ENCODE measurements at regions of chr19 and their contacts with region 1.

Region 1: GRCh38 chr19:55605207-55605636 is 225 bp upstream of the ZNF865 start:
- DNase-seq: peak; percentile 95 to 98 (median 97)
- H3K4me3 ChIP-seq: peak overlapping the region; percentile 43 to 83
- H3K4me3 Mint-ChIP-seq: peak overlapping the region; percentile 79 to 93 (median 84)
- H3K27ac ChIP-seq: peak overlapping the region; percentile 88
- H3K27ac Mint-ChIP-seq: peak overlapping the region; percentile 83 to 97 (median 94)
- H3K4me1 ChIP-seq: peaks cover 42% of the 10 kb centered on the region
- H3K4me1 Mint-ChIP-seq: peaks cover 41 to 73% (median 48%) of the 10 kb centered on the region in 4 donors
- H3K27me3 ChIP-seq: no peaks in the 10 kb centered on the region
- H3K27me3 Mint-ChIP-seq: no peaks in the 10 kb centered on the region

Region 2: GRCh38 chr19:55516878-55517620 is 88.2 kb before region 1 on chr19:
- CTCF ChIA-PET with region 1: interaction called, 22 read pairs
- POLR2A ChIA-PET with region 1: interaction called, 5 read pairs
- intact Hi-C with region 1: loop called (anchors 1 kb)
- DNase-seq: peak; percentile 85 to 86 (median 86)
- H3K4me3 ChIP-seq: peak overlapping the region in 1 of 2 donors; percentile 38
- H3K4me3 Mint-ChIP-seq: peak overlapping the region; percentile 71 to 86 (median 82)
- H3K27ac ChIP-seq: peak overlapping the region; percentile 42
- H3K27ac Mint-ChIP-seq: peak overlapping the region; percentile 77 to 97 (median 92)
- H3K4me1 ChIP-seq: peaks cover 6% of the 10 kb centered on the region
- H3K4me1 Mint-ChIP-seq: peaks cover 3 to 4% (median 3%) of the 10 kb centered on the region in 4 donors
- H3K27me3 ChIP-seq: no peaks in the 10 kb centered on the region
- H3K27me3 Mint-ChIP-seq: peaks cover 1 to 11% of the 10 kb centered on the region in 2 donors

Region 3: GRCh38 chr19:55552620-55553019 is 52.6 kb before region 1 on chr19:
- CTCF ChIA-PET with region 1: no interaction called
- POLR2A ChIA-PET with region 1: no interaction called
- intact Hi-C with region 1: no loop called
- DNase-seq: no peak
- H3K4me3 ChIP-seq: no peak overlapping the region
- H3K4me3 Mint-ChIP-seq: no peak overlapping the region
- H3K27ac ChIP-seq: no peak overlapping the region
- H3K27ac Mint-ChIP-seq: no peak overlapping the region
- H3K4me1 ChIP-seq: no peaks in the 10 kb centered on the region
- H3K4me1 Mint-ChIP-seq: no peaks in the 10 kb centered on the region
- H3K27me3 ChIP-seq: no peaks in the 10 kb centered on the region
- H3K27me3 Mint-ChIP-seq: peaks cover 13 to 21% of the 10 kb centered on the region in 2 donors

Region 4: GRCh38 chr19:55580628-55581144 is 24.5 kb before region 1 on chr19 and contains the start of gene ZNF579:
- CTCF ChIA-PET with region 1: interaction called, 9 read pairs
- POLR2A ChIA-PET with region 1: interaction called, 49 read pairs
- intact Hi-C with region 1: no loop called
- DNase-seq: peak; percentile 58 to 78 (median 63)
- H3K4me3 ChIP-seq: peak within 1 kb of the TSS; percentile 61 to 68
- H3K4me3 Mint-ChIP-seq: peak within 1 kb of the TSS; percentile 81 to 97 (median 88)
- H3K27ac ChIP-seq: peak within 1 kb of the TSS; percentile 69
- H3K27ac Mint-ChIP-seq: peak within 1 kb of the TSS; percentile 86 to 95 (median 93)
- H3K4me1 ChIP-seq: peaks cover 21% of the 10 kb centered on the region
- H3K4me1 Mint-ChIP-seq: peaks cover 22 to 38% (median 25%) of the 10 kb centered on the region in 4 donors
- H3K27me3 ChIP-seq: no peaks in the 10 kb centered on the region
- H3K27me3 Mint-ChIP-seq: peaks cover 0 to 1% of the 10 kb centered on the region in 2 donors
- total RNA-seq, gene ZNF579: 8.0 to 9.6 TPM

Region 5: DNA sequence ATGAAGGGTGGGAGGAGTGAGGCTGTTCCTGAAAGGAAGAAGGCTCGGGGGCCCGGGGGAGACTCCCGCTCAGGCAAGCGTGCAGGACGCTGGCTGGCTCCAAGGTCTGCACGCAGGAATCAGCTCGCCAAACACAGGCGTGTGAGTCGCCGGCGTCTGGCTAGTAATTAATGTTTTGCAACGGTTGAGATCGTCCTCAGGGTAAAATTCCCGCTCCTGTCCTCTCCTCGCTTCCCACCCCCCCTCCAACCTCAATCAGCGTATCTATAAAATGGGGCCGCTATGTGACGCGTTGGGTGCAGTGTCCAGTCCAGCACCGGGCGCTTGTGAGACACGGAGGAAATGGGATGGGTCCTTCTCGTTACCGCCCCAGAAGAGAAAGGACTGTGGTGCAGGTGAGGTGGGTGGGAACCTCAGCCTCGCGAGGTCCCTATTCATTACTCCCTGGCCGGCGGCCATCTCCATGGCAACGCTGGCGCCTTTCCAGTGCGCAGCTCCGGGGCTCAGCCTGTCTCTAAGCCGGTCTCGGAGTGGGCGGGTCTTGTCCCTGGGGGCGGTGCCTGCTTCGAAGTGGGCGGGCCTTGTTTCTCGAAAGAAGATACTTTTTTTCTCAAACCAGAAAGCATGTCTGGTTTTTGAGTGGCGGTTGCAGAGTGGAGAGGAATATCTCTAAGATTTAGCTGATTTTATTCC is 18.1 kb before region 1 on chr19:
- CTCF ChIA-PET with region 1: interaction called, 9 read pairs
- POLR2A ChIA-PET with region 1: interaction called, 49 read pairs
- intact Hi-C with region 1: loop called (anchors 1 kb)
- DNase-seq: peak; percentile 88 to 96 (median 91)
- H3K4me3 ChIP-seq: peak overlapping the region in 1 of 2 donors; percentile 60
- H3K4me3 Mint-ChIP-seq: peak overlapping the region; percentile 84 to 94 (median 87)
- H3K27ac ChIP-seq: no peak overlapping the region
- H3K27ac Mint-ChIP-seq: peak overlapping the region; percentile 85 to 93 (median 88)
- H3K4me1 ChIP-seq: peaks cover 29% of the 10 kb centered on the region
- H3K4me1 Mint-ChIP-seq: peaks cover 12 to 46% (median 28%) of the 10 kb centered on the region in 4 donors
- H3K27me3 ChIP-seq: no peaks in the 10 kb centered on the region
- H3K27me3 Mint-ChIP-seq: no peaks in the 10 kb centered on the region

Region 6: GRCh38 chr19:55619286-55619685 is 14.1 kb after region 1 on chr19:
- CTCF ChIA-PET with region 1: interaction called, 94 read pairs
- POLR2A ChIA-PET with region 1: interaction called, 95 read pairs
- intact Hi-C with region 1: loop called (anchors 1 kb)
- DNase-seq: no peak
- H3K4me3 ChIP-seq: no peak overlapping the region
- H3K4me3 Mint-ChIP-seq: no peak overlapping the region
- H3K27ac ChIP-seq: no peak overlapping the region
- H3K27ac Mint-ChIP-seq: peak overlapping the region in 2 of 7 donors; percentile 35 to 69
- H3K4me1 ChIP-seq: peaks cover 10% of the 10 kb centered on the region
- H3K4me1 Mint-ChIP-seq: peaks cover 10 to 26% (median 18%) of the 10 kb centered on the region in 4 donors
- H3K27me3 ChIP-seq: no peaks in the 10 kb centered on the region
- H3K27me3 Mint-ChIP-seq: no peaks in the 10 kb centered on the region

Region 7: DNA sequence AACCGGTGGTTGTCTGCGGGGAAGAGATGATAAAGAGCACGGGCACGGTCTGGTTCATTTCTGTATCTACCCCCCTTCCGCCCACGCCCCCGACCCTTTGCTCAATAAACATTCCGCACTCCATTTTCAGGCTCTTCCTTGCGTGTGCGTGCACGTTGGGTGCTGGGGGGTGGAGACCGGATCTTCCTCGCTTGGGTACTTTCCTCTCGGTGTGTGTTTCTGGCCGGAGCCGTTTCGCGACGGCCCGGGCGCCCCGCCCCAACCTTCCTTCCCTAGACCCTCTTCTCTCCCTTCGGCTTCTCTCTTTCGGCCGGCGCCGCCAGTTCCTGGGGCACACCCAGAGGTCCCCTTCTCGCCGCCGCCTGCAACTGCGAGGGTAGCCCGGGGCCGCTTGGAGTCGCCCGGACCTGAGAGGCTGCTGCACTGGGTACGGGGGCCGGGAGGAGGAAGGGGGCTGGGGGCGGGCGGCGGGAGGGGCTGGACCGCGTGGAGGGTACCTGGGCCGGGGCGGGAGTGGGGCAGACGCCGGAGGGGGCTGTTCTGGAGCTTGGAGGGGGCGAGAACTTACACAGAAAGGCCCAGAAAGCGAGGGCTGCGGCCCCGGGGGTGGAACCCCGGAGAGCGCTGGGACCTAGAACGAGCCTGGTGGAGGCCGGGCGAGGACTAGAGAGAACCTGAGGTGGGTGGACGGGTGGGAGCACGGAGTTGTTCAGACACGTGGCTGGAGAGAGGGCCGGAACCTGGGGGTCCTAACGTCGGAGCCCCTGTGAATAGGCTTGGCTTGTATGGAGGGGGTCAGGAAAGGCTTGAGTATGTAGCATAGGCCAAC is 38.3 kb after region 1 on chr19 and contains the start of gene ZNF581:
- CTCF ChIA-PET with region 1: interaction called, 4 read pairs
- POLR2A ChIA-PET with region 1: interaction called, 30 read pairs
- intact Hi-C with region 1: loop called (anchors 5 kb)
- DNase-seq: peak; percentile 77 to 85 (median 79)
- H3K4me3 ChIP-seq: peak within 1 kb of the TSS; percentile 53 to 83
- H3K4me3 Mint-ChIP-seq: peak within 1 kb of the TSS; percentile 86 to 96 (median 92)
- H3K27ac ChIP-seq: peak within 1 kb of the TSS; percentile 69
- H3K27ac Mint-ChIP-seq: peak within 1 kb of the TSS; percentile 87 to 99 (median 94)
- H3K4me1 ChIP-seq: peaks cover 49% of the 10 kb centered on the region
- H3K4me1 Mint-ChIP-seq: peaks cover 29 to 62% (median 45%) of the 10 kb centered on the region in 4 donors
- H3K27me3 ChIP-seq: no peaks in the 10 kb centered on the region
- H3K27me3 Mint-ChIP-seq: no peaks in the 10 kb centered on the region
- total RNA-seq, gene ZNF581: 21.2 to 23.4 TPM

Region 8: DNA sequence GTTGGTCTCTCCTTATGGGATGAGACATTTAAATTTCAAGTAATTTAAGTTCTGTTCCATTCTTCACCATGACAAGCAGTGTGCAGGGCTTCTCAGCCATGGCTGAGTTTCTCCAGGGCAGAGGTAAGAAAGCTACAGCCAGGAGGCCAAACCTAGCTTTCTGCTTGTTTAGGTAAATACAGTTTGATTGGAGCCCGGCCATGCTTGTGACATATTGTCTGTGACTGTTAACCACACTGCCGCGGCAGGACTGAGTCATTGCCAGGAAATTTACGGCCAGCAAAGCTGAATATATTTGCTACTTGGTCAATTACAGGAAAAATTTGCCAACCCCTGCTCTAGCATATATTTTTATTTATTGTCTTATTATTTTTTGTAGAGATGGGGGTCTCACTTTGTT is 353.1 kb after region 1 on chr19:
- CTCF ChIA-PET with region 1: no interaction called
- POLR2A ChIA-PET with region 1: no interaction called
- intact Hi-C with region 1: no loop called
- DNase-seq: no peak
- H3K4me3 ChIP-seq: no peak overlapping the region
- H3K4me3 Mint-ChIP-seq: no peak overlapping the region
- H3K27ac ChIP-seq: no peak overlapping the region
- H3K27ac Mint-ChIP-seq: no peak overlapping the region
- H3K4me1 ChIP-seq: no peaks in the 10 kb centered on the region
- H3K4me1 Mint-ChIP-seq: no peaks in the 10 kb centered on the region
- H3K27me3 ChIP-seq: no peaks in the 10 kb centered on the region
- H3K27me3 Mint-ChIP-seq: no peaks in the 10 kb centered on the region

Region 9: GRCh38 chr19:56140583-56141416 is 535.6 kb after region 1 on chr19 and contains the start of gene ZNF444:
- CTCF ChIA-PET with region 1: no interaction called
- POLR2A ChIA-PET with region 1: no interaction called
- intact Hi-C with region 1: loop called (anchors 2 kb)
- DNase-seq: peak; percentile 99 to 100 (median 99)
- H3K4me3 ChIP-seq: peak within 1 kb of the TSS; percentile 71 to 96
- H3K4me3 Mint-ChIP-seq: peak within 1 kb of the TSS; percentile 87 to 98 (median 94)
- H3K27ac ChIP-seq: peak within 1 kb of the TSS; percentile 73
- H3K27ac Mint-ChIP-seq: peak within 1 kb of the TSS; percentile 89 to 98 (median 96)
- H3K4me1 ChIP-seq: peaks cover 22% of the 10 kb centered on the region
- H3K4me1 Mint-ChIP-seq: peaks cover 24 to 46% (median 33%) of the 10 kb centered on the region in 4 donors
- H3K27me3 ChIP-seq: no peaks in the 10 kb centered on the region
- H3K27me3 Mint-ChIP-seq: no peaks in the 10 kb centered on the region
- total RNA-seq, gene ZNF444: 33.2 to 42.8 TPM